H1 (cell line): ENCODE measurements at regions of chr13 and their contacts with region 1.

Region 1: DNA sequence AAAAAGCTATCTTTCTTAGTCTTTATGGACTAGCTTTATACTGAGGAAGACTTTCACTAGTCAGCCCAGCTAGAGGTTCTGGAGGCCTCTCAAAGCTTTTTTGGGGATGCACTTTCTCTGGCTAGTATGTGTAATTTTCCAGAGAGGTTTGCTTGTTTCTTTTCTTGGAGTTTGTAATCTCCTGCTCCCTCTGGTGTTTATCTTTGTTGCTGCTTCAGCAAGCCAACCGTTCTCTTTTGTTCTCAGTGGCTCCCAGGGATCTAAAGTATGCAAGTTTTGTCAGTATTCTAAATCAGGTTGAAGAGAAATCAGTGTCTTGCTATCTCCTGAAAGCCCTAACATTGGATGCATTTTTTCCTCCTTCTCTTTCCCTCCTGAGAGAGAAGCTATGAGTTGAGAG is 121.1 kb upstream of the MYO16 start:
- DNase-seq: no peak
- H3K4me3 ChIP-seq: no peak overlapping the region
- H3K27ac ChIP-seq: no peak overlapping the region
- H3K4me1 ChIP-seq: no peaks in the 10 kb centered on the region
- H3K27me3 ChIP-seq: no peaks in the 10 kb centered on the region
- CTCF ChIP-seq: peak in 2 of 3 experiments; percentile 70 to 73; a peak in 3 of 4 replicates
- EP300 ChIP-seq: no peak
- POLR2A ChIP-seq: no peak
- RAD21 ChIP-seq: peak; percentile 83 to 84

Region 2: DNA sequence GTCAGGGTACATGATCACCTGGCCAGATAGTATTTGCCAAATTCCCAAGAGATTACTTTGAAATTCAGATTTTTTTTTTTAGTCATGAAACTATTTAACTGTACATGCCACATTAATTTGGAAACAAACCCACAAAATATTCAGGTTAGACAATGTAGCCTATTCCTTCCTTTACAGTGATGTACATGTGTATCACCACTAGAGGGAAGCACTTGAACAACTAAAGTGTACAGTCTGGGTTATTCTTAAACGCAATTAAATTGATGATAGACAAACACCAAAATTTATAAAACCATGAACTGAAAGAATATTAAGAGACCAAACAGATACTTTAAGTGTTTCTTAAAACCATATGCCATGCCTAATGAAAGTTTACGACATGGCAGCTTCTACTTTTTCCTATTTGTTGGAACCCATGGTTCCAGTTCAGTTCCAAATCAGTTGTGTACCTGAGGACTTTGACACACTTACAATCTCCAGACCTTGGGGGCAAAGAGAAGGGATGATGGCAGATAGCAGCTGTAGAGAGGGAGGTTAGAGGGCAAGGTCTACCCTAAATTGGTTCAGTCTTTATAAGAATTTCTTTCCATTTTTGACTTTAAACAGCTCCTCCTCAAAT is 185.9 kb before region 1 on chr13:
- CTCF ChIA-PET with region 1: interaction called, 23 read pairs
- POLR2A ChIA-PET with region 1: no interaction called
- DNase-seq: no peak
- H3K4me3 ChIP-seq: no peak overlapping the region
- H3K27ac ChIP-seq: no peak overlapping the region
- H3K4me1 ChIP-seq: peaks cover 0 to 9% (median 0%) of the 10 kb centered on the region in 4 experiments; a peak in 1 of 7 replicates
- H3K27me3 ChIP-seq: no peaks in the 10 kb centered on the region
- CTCF ChIP-seq: peak in 2 of 3 experiments; percentile 42 to 65; a peak in 2 of 4 replicates
- EP300 ChIP-seq: no peak
- POLR2A ChIP-seq: no peak
- RAD21 ChIP-seq: peak; percentile 74 to 76

Region 3: GRCh38 chr13:108342369-108343289 is 165.6 kb before region 1 on chr13:
- CTCF ChIA-PET with region 1: interaction called, 40 read pairs
- POLR2A ChIA-PET with region 1: no interaction called
- DNase-seq: no peak
- H3K4me3 ChIP-seq: no peak overlapping the region
- H3K27ac ChIP-seq: no peak overlapping the region
- H3K4me1 ChIP-seq: no peaks in the 10 kb centered on the region
- H3K27me3 ChIP-seq: no peaks in the 10 kb centered on the region
- CTCF ChIP-seq: peak in 2 of 3 experiments; percentile 52 to 66; a peak in 3 of 4 replicates
- EP300 ChIP-seq: no peak
- POLR2A ChIP-seq: no peak
- RAD21 ChIP-seq: peak; percentile 65 to 74

Region 4: DNA sequence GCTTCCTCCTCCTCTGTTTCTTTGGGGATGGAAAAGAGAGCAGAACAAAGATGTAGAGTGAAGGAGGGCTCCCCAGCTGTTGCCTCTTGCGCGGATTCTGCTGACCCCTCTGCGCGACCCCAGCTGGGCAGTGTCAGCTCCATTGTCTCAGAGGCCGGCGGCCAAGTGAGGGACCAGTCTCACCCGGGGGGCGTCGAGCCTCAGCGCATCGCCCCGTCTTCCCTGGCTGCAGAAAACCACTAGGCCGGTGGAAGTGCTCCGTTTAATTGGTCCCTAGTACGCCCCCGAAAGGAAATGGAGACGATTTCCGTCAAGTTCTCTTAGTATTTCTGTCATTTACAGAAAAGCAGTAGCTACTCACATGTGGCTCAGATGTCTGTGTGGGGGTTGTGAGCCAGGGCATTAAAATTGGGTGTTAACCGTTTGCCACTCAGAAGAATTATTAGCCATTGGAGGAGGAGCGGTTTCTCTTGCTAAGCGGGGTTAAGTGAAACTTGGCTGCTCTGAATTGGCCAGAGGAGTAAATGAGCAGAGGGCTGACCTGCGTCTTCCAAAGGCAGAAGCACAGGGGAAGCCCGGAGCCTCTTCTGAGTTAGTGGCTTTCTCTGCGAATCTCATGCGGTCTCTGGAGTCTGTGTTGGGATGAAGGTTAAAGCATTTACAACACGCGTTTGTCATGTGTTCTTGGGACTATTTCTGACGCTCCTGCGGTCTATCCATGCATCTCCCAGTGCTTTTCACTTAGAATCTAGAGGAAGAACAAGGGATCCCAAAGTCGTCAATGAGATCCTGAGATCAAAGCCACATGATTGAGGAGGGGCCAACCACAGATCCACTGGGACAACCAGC is 11.7 kb before region 1 on chr13:
- CTCF ChIA-PET with region 1: interaction called, 12 read pairs
- POLR2A ChIA-PET with region 1: no interaction called
- DNase-seq: peak in 1 of 2 experiments; percentile 46
- H3K4me3 ChIP-seq: peak overlapping the region; percentile 51 to 90 (median 66); a peak in 7 of 8 replicates
- H3K27ac ChIP-seq: no peak overlapping the region
- H3K4me1 ChIP-seq: peaks cover 0 to 10% (median 2%) of the 10 kb centered on the region in 4 experiments; a peak in 4 of 7 replicates
- H3K27me3 ChIP-seq: peaks cover 15 to 43% (median 35%) of the 10 kb centered on the region in 4 experiments
- CTCF ChIP-seq: no peak
- EP300 ChIP-seq: no peak
- POLR2A ChIP-seq: no peak
- RAD21 ChIP-seq: no peak